A673 (cell line): ENCODE measurements at regions of chr13 and their contacts with region 1.

Region 1: DNA sequence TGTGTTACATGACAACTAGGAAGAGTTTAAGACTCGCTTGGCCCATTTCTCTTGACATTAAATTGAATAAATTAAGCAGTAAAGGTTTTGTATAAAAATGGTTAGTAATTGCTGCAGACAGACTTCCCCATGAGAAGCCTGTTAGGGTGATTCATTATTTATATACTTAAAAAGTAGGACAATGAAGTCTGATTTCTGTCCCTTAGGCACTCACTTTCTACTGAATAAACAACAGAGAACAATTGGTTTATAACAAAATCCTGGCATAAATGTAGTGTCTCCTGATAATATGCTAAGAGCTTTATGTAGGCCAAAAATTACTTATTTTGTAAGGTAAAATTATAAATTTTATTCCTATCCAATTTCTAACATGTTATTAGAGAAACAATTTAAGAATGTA is 2138.5 kb upstream of the PCDH20 start:
- DNase-seq: no peak
- H3K4me3 ChIP-seq: no peak overlapping the region
- H3K27ac ChIP-seq: no peak overlapping the region
- H3K4me1 ChIP-seq: no peaks in the 10 kb centered on the region
- H3K27me3 ChIP-seq: no peaks in the 10 kb centered on the region
- CTCF ChIP-seq: no peak

Region 2: DNA sequence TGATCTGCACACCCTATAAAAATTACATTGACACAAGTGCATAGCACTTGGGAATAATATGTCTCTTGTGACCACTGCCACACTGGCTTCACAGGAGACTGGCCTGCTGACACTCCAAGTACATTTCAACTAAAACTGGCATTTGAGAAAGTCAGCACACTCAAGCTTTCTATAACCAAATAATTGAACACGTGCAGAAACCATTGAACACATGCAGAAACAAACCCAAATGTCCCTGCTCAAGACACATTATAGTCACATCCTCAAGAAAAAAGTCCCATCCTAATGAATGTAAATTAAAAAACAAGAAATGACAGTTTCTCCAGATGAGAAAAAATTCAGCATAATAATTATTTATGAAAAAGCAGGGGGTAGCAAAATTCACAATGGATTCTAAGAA is 279.4 kb before region 1 on chr13:
- CTCF ChIA-PET with region 1: no interaction called
- POLR2A ChIA-PET with region 1: interaction called, 14 read pairs
- intact Hi-C with region 1: no loop called
- DNase-seq: no peak
- H3K4me3 ChIP-seq: no peak overlapping the region
- H3K27ac ChIP-seq: no peak overlapping the region
- H3K4me1 ChIP-seq: no peaks in the 10 kb centered on the region
- H3K27me3 ChIP-seq: no peaks in the 10 kb centered on the region
- CTCF ChIP-seq: no peak